PC-3 (cell line): ENCODE measurements at regions of chr14 and their contacts with region 1.

Region 1: DNA sequence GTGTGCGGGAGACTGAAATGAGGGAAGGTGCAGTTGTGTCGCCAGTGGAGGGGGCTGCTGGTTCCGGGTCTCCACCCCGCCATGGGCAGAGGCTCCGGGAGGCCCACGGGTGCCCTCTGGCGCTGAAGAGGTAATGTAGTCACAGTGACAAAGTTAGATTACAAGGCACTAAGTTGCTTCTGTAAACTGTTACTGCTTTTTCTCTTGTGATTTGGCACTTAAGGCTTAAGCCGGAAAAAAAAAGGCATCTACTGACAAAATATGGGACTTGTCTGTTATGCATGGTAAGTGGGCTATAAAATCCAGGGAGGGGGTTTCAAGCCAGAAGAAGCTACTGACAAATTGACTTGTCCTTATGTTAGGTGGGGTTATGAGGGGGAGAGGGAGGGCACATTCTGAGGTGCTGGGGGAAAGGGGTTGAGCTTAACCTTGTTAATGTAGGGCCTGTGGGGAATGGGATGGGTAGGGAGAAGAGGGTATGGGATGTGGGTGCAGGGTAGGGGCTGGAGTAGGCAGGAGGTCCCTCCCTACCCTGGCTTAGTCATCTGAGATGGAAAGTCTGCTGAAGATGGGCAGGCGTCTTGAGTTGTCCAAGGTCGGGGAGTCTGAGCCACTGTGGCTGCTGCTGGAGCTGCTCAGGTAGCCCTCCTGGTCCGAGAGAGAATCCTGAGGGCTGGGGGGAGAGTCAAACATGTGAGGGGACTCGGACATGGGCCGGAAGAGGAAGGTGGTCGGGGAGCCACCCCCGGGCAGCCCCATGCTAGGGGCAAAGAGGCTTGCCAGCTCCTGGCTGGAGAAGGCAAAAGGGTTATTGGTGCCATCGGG is 3.7 kb downstream of the ZFP36L1 start:
- DNase-seq: peak; percentile 89
- ATAC-seq: peak; percentile 19
- H3K4me3 ChIP-seq: peak overlapping the region; percentile 90
- H3K27ac ChIP-seq: peak overlapping the region; percentile 97
- H3K4me1 ChIP-seq: peaks cover 56% of the 10 kb centered on the region
- H3K27me3 ChIP-seq: no peaks in the 10 kb centered on the region
- CTCF ChIP-seq: peak; percentile 86

Region 2: GRCh38 chr14:68297876-68298469 is 491.2 kb before region 1 on chr14:
- CTCF ChIA-PET with region 1: no interaction called
- POLR2A ChIA-PET with region 1: interaction called, 3 read pairs
- intact Hi-C with region 1: loop called (anchors 1 kb)
- DNase-seq: peak; percentile 32
- ATAC-seq: peak; percentile 64
- H3K4me3 ChIP-seq: no peak overlapping the region
- H3K27ac ChIP-seq: no peak overlapping the region
- H3K4me1 ChIP-seq: no peaks in the 10 kb centered on the region
- H3K27me3 ChIP-seq: no peaks in the 10 kb centered on the region
- CTCF ChIP-seq: peak; percentile 58

Region 3: GRCh38 chr14:68359837-68360552 is 429.2 kb before region 1 on chr14:
- CTCF ChIA-PET with region 1: no interaction called
- POLR2A ChIA-PET with region 1: interaction called, 6 read pairs
- intact Hi-C with region 1: loop called (anchors 5 kb)
- DNase-seq: peak; percentile 28
- ATAC-seq: peak; percentile 62
- H3K4me3 ChIP-seq: no peak overlapping the region
- H3K27ac ChIP-seq: no peak overlapping the region
- H3K4me1 ChIP-seq: peaks cover 29% of the 10 kb centered on the region
- H3K27me3 ChIP-seq: no peaks in the 10 kb centered on the region
- CTCF ChIP-seq: no peak

Region 4: DNA sequence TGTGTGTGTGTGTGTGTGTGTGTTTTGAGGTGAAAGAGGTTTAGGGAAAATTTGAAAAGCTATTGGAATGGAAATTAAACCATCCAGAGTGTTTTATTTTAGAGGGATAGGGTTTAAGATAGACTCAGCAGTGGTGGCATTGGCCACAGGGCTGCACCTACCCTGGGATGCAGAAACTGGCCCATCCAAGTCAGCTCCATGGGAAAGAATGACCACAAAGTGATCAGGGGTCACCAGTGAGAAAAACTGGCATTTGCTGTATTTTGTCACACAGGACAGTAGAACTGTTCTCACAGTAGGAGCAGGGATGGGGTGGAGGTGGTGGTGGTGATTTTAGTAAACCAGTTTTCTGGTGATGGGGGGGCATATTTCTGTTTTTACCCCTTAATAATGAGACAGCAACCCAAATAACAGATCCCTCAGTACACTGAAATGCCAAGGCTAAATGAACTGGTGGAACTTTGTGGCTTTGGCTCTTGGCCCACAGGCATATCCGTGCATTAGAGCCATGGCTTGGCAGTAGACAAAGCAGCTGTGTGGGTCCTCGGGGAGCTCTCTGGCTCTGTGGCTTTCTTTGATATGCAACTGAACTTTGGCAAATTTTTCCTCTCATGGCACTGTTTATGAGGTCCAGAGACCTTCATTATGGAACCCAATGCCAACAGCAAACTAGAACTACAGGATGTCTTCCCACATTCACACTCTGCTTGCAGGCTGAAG is 344.6 kb before region 1 on chr14:
- CTCF ChIA-PET with region 1: interaction called, 5 read pairs
- POLR2A ChIA-PET with region 1: interaction called, 39 read pairs
- intact Hi-C with region 1: loop called (anchors 2 kb)
- DNase-seq: peak; percentile 64
- ATAC-seq: peak; percentile 44
- H3K4me3 ChIP-seq: no peak overlapping the region
- H3K27ac ChIP-seq: no peak overlapping the region
- H3K4me1 ChIP-seq: peaks cover 42% of the 10 kb centered on the region
- H3K27me3 ChIP-seq: no peaks in the 10 kb centered on the region
- CTCF ChIP-seq: no peak

Region 5: GRCh38 chr14:68718023-68718995 is 70.9 kb before region 1 on chr14:
- CTCF ChIA-PET with region 1: no interaction called
- POLR2A ChIA-PET with region 1: no interaction called
- intact Hi-C with region 1: no loop called
- DNase-seq: peak; percentile 52
- ATAC-seq: peak; percentile 82
- H3K4me3 ChIP-seq: no peak overlapping the region
- H3K27ac ChIP-seq: no peak overlapping the region
- H3K4me1 ChIP-seq: no peaks in the 10 kb centered on the region
- H3K27me3 ChIP-seq: no peaks in the 10 kb centered on the region
- CTCF ChIP-seq: peak; percentile 63

Region 6: DNA sequence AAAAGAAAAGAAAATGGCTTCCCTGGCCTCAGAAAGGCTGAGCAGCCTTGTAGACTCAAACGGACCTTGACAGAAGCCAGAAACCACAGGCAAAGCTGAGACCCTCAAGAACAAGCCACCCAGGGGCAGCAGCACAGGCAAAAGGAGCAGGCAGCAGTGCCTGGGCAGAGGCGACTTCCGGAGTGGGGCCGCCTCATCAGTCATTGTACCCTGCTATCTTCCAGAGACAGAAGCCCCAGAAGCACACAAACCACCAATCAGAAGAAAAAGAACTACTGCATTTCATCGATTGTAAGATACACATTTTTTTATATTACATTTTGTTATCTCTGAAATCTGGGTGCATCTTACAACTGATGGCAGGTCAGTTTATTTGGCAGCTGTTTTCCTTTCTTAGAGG is 61.9 kb after region 1 on chr14:
- CTCF ChIA-PET with region 1: no interaction called
- POLR2A ChIA-PET with region 1: interaction called, 12 read pairs
- intact Hi-C with region 1: no loop called
- DNase-seq: no peak
- ATAC-seq: no peak
- H3K4me3 ChIP-seq: no peak overlapping the region
- H3K27ac ChIP-seq: no peak overlapping the region
- H3K4me1 ChIP-seq: no peaks in the 10 kb centered on the region
- H3K27me3 ChIP-seq: no peaks in the 10 kb centered on the region
- CTCF ChIP-seq: no peak